HEK293T (cell line): ENCODE measurements at regions of chr5 and their contacts with region 1.

Region 1: DNA sequence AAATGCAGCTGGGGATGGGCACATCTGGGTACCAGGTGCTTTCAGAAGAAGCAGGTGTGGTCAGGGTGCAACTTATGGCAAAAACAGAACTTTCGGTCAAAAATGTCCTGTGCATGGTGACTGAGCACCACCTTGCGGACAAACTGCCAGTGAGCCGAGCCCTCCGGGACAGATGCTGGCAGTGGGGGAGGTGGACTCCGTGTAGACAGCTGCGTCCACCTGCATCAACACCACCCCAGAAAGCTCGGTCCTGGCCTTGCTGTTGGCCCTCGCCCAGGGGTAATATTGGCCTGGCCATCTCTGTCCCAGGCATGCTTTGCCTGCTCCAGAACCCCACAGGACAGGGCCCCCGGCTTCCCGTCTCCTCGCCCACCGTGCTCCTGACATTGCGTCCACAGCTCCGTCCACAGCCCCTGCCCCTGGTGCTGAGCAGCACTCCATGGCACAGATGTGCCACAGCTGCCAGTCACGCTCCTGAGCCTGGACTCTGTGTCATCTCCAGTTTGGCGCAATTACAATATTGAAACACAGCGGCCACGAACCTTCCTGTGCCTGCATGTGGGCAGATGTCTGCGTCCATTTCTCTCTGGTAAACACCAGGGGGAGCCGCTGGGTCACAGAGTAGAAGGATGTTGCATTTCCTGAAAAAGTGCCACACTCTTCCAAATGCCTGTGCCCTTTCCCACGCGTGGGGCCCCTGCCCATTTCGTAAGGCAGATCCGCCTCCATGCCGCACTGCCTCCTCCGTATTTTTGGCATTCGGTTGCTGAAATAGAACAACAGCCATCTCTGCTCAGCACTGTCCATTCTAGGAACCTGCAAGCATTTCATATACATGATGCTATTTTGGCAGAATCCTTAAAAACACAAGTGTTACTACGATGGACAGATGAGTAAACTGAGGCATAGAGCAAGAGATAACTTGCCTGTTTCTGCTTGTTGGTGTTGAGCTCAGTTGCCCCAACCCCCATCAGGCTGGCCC is 33.4 kb upstream of the SLC6A19 start:
- DNase-seq: peak; percentile 78

Region 2: GRCh38 chr5:923281-923873 is 244.6 kb before region 1 on chr5:
- CTCF ChIA-PET with region 1: interaction called, 21 read pairs
- POLR2A ChIA-PET with region 1: no interaction called
- DNase-seq: peak; percentile 91

Region 3: GRCh38 chr5:1152156-1152555 is 15.9 kb before region 1 on chr5:
- CTCF ChIA-PET with region 1: interaction called, 10 read pairs
- POLR2A ChIA-PET with region 1: no interaction called
- DNase-seq: no peak